Tibial artery (tissue), 4 donors: ENCODE measurements at regions of chr6 and their contacts with region 1.

Region 1: DNA sequence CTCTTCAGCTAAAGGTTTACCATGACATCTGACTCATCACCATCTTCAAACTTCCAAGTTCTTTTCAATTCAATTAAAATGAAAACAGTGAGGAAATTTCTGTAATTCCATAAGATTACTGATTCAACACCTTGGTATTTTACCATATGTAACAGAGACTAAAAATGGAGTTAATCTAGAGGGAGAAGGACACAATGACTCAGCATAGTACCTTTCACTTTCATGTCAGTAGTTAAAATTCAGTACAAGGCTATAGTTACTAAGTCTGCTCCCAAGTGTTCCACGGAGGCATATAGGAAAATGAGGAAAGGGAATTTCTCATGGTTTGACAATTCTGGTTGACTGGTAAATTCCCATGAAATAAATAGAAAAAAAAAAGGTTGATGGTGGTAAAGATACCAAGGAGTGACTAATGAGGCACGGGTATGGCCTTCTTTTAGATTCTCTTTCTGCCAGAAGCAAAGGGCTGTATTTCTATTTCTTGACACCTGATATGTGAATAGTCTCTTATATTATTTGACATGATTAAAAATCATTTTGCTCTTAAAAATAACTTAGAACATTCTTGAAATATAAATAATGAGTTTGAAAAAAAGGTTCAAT is 526.7 kb upstream of the ADGRB3 start:
- DNase-seq: no peak
- H3K4me3 ChIP-seq: no peak overlapping the region
- H3K27ac ChIP-seq: no peak overlapping the region
- H3K4me1 ChIP-seq: no peaks in the 10 kb centered on the region
- H3K27me3 ChIP-seq: no peaks in the 10 kb centered on the region
- CTCF ChIP-seq: no peak

Region 2: DNA sequence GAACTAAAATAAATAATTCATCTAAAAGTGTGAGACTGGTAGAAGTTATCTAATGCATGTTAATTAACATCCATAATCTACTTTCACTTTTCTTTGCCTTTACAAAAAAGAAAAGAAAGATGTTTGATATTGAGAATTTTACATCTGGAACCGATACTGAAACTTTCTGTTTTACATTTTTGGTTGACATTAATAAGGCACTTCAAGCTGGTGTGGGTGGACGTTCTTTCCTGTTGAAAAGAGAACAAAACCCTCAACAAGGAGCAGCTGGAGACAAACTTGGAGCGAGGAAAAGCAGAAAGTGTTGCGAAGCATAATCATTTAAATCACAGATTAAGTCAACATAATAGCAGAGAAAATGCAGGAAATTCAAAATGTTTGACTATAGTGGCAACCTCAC is 48.4 kb before region 1 on chr6:
- intact Hi-C with region 1: loop called (anchors 1 kb)
- DNase-seq: no peak
- H3K4me3 ChIP-seq: no peak overlapping the region
- H3K27ac ChIP-seq: no peak overlapping the region
- H3K4me1 ChIP-seq: no peaks in the 10 kb centered on the region
- H3K27me3 ChIP-seq: no peaks in the 10 kb centered on the region
- CTCF ChIP-seq: no peak

Region 3: GRCh38 chr6:68279793-68280557 is 171.6 kb after region 1 on chr6:
- intact Hi-C with region 1: no loop called
- DNase-seq: no peak
- H3K4me3 ChIP-seq: no peak overlapping the region
- H3K27ac ChIP-seq: no peak overlapping the region
- H3K4me1 ChIP-seq: no peaks in the 10 kb centered on the region
- H3K27me3 ChIP-seq: no peaks in the 10 kb centered on the region
- CTCF ChIP-seq: no peak